Natural killer cell (primary cell): ENCODE measurements at regions of chr15 and their contacts with region 1.

Region 1: GRCh38 chr15:41811432-41812195 is 16.3 kb upstream of the JMJD7 start:
- DNase-seq: peak; percentile 75 to 86
- ATAC-seq: peak; percentile 83 to 99 (median 98)
- H3K4me3 ChIP-seq: no peak overlapping the region
- H3K4me3 Mint-ChIP-seq: no peak overlapping the region
- H3K27ac ChIP-seq: no peak overlapping the region
- H3K27ac Mint-ChIP-seq: no peak overlapping the region
- H3K4me1 ChIP-seq: peaks cover 13% of the 10 kb centered on the region
- H3K4me1 Mint-ChIP-seq: peaks cover 7 to 9% of the 10 kb centered on the region in 2 donors
- H3K27me3 ChIP-seq: no peaks in the 10 kb centered on the region
- H3K27me3 Mint-ChIP-seq: no peaks in the 10 kb centered on the region
- CTCF ChIP-seq: peak; percentile 89

Region 2: DNA sequence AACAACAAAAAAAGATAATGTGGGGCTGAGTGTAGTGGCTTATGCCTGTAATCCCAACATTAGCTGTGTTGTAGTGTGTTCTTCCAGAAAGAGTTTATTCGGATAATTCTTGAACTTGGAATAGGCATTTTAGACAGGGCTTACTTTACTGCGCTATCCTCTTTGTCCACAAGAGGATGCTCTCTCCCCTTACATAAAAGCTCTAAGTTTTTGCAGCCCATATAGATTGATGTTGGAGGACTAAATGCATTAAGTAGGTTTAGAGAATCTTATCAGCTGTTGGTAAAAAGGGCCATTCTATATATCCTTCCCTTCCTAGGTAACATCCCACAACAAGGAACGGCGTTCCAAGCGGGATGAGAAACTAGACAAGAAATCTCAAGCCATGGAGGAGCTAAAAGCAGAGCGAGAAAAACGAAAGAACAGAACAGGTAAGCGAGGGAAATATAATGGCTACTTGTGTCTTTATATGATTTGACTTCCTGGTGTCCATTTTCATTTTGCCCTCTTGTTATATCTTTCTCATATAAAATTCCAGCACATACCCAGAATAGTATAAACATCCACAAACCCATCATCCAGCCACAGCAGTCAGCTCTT is 345.7 kb before region 1 on chr15:
- intact Hi-C with region 1: loop called (anchors 5 kb)
- DNase-seq: peak in 1 of 2 donors; percentile 70
- ATAC-seq: peak; percentile 63 to 85 (median 78)
- H3K4me3 ChIP-seq: no peak overlapping the region
- H3K4me3 Mint-ChIP-seq: peak overlapping the region; percentile 75
- H3K27ac ChIP-seq: no peak overlapping the region
- H3K27ac Mint-ChIP-seq: peak overlapping the region; percentile 23 to 37
- H3K4me1 ChIP-seq: peaks cover 6% of the 10 kb centered on the region
- H3K4me1 Mint-ChIP-seq: peaks cover 18 to 23% of the 10 kb centered on the region in 2 donors
- H3K27me3 ChIP-seq: no peaks in the 10 kb centered on the region
- H3K27me3 Mint-ChIP-seq: no peaks in the 10 kb centered on the region
- CTCF ChIP-seq: peak; percentile 93

Region 3: DNA sequence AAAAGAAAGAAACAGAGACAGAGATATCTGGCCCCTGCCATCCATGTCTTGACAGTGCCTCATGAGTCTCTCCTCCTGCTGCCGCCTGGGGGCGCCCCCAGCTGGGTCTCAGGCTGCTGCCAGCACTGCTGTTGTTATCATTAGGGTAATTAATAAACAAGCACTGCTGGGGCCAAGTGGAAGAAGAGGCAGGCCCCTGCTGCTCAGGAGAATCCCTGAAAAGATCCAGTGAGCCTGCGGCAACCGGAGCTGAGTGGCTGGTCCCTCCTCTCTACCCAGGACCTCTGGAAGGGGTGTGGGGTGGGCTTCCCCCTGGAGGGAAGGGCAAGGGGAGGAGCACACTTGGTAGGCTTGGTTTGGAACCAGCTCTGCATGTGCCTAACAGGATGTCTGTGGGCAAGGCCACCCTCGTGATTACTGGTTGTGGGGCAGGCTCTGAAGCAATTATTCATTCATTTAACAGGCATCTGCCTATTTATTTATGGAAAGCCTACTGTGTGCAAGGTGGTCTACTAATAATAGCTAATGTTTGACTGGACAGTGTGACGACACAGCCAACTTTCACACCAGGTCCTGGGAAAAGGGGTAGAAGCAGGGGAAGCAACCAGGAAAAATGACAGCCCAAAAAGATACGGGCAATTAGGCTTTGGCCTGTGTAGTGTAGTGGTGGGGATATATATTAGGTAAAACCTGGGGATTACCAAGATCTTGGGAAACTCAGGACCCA is 253.8 kb before region 1 on chr15:
- intact Hi-C with region 1: loop called (anchors 1 kb)
- DNase-seq: peak; percentile 76 to 87
- ATAC-seq: peak; percentile 84 to 92 (median 90)
- H3K4me3 ChIP-seq: no peak overlapping the region
- H3K4me3 Mint-ChIP-seq: peak overlapping the region; percentile 94
- H3K27ac ChIP-seq: peak overlapping the region; percentile 10
- H3K27ac Mint-ChIP-seq: peak overlapping the region; percentile 90 to 95
- H3K4me1 ChIP-seq: peaks cover 21% of the 10 kb centered on the region
- H3K4me1 Mint-ChIP-seq: peaks cover 11 to 26% of the 10 kb centered on the region in 2 donors
- H3K27me3 ChIP-seq: peaks cover 23% of the 10 kb centered on the region
- H3K27me3 Mint-ChIP-seq: peaks cover 0 to 26% of the 10 kb centered on the region in 2 donors
- CTCF ChIP-seq: peak; percentile 97

Region 4: GRCh38 chr15:41603941-41604911 is 207.4 kb before region 1 on chr15:
- intact Hi-C with region 1: loop called (anchors 1 kb)
- DNase-seq: peak; percentile 30 to 79
- ATAC-seq: peak; percentile 80 to 96 (median 85)
- H3K4me3 ChIP-seq: no peak overlapping the region
- H3K4me3 Mint-ChIP-seq: no peak overlapping the region
- H3K27ac ChIP-seq: no peak overlapping the region
- H3K27ac Mint-ChIP-seq: no peak overlapping the region
- H3K4me1 ChIP-seq: peaks cover 7% of the 10 kb centered on the region
- H3K4me1 Mint-ChIP-seq: peaks cover 7 to 10% of the 10 kb centered on the region in 2 donors
- H3K27me3 ChIP-seq: no peaks in the 10 kb centered on the region
- H3K27me3 Mint-ChIP-seq: peaks cover 24 to 35% of the 10 kb centered on the region in 2 donors
- CTCF ChIP-seq: peak; percentile 66

Region 5: DNA sequence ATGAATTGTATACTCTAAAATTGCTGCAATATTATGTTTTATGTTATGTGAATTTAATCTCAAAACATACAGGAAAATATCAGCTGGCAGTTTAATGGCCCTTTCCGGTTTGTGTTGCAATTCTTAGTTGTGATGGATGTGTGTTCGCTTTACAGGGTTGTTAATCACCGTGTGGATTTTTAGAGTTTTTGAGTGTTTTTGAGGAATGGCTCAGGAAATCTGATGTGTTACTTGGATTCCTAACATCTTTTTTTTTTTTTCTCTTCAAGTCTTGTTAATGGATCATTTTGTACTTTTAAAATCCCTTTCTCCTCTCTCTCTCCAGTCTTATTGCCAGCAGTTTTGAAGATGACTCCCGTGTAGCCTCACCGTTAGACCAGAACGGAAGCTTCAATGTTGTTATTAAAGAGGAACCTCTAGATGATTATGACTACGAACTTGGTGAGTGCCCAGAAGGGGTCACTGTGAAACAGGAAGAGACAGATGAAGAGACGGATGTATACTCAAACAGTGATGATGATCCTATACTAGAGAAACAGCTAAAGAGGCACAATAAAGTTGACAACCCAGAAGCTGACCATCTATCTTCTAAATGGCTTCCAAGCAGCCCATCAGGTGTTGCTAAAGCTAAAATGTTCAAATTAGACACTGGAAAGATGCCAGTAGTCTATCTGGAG is 115.7 kb before region 1 on chr15:
- intact Hi-C with region 1: loop called (anchors 1 kb)
- DNase-seq: peak in 1 of 2 donors; percentile 78
- ATAC-seq: peak; percentile 96 to 98 (median 98)
- H3K4me3 ChIP-seq: no peak overlapping the region
- H3K4me3 Mint-ChIP-seq: peak overlapping the region; percentile 32
- H3K27ac ChIP-seq: peak overlapping the region; percentile 60
- H3K27ac Mint-ChIP-seq: peak overlapping the region; percentile 64 to 80
- H3K4me1 ChIP-seq: no peaks in the 10 kb centered on the region
- H3K4me1 Mint-ChIP-seq: peaks cover 21 to 41% of the 10 kb centered on the region in 2 donors
- H3K27me3 ChIP-seq: no peaks in the 10 kb centered on the region
- H3K27me3 Mint-ChIP-seq: no peaks in the 10 kb centered on the region
- CTCF ChIP-seq: peak; percentile 56

Region 6: GRCh38 chr15:41860049-41860828 is 48.6 kb after region 1 on chr15:
- intact Hi-C with region 1: no loop called
- DNase-seq: no peak
- ATAC-seq: no peak
- H3K4me3 ChIP-seq: no peak overlapping the region
- H3K4me3 Mint-ChIP-seq: no peak overlapping the region
- H3K27ac ChIP-seq: no peak overlapping the region
- H3K27ac Mint-ChIP-seq: no peak overlapping the region
- H3K4me1 ChIP-seq: peaks cover 16% of the 10 kb centered on the region
- H3K4me1 Mint-ChIP-seq: no peaks in the 10 kb centered on the region
- H3K27me3 ChIP-seq: no peaks in the 10 kb centered on the region
- H3K27me3 Mint-ChIP-seq: no peaks in the 10 kb centered on the region
- CTCF ChIP-seq: no peak